MCF 10A (cell line): ENCODE measurements at regions of chr20 and their contacts with region 1.

Region 1: DNA sequence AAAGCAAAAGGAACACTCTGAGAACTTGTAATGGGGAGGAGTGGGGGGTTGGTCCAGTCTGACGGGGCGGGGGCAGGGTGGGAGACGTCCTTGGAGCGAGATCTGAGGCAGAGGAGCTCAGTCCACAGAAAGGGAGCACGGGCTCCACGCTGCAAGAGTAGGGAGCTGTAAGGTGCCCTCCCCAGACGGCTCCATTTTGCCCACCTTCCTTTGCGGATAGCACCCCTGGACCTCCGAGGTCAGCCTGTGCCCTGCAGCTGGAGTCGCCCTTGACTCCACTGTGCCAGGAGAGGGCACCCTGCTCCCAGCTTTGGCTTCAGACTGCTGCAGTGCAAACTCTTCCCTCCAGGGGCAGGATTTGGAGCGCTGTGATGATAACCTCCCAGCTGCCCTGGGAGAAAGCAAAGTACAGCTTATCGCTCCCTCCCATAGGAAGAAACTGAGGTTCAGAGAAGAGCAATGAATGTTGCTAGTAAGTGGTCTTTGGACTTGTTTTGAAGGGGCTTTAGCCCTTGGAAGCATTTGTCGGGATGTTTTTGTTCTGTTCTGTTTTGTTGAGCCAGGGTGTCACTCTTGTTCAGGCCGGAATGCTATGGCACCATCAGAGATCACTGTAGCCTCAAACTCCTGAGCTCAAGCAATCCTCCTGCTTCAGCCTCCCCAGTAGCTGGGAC is 9.5 kb upstream of the AHCY start:
- DNase-seq: peak; percentile 91
- H3K4me3 Mint-ChIP-seq: peak overlapping the region; percentile 35
- H3K27ac Mint-ChIP-seq: no peak overlapping the region
- H3K4me1 Mint-ChIP-seq: peaks cover 37% of the 10 kb centered on the region
- H3K27me3 Mint-ChIP-seq: no peaks in the 10 kb centered on the region
- CTCF ChIP-seq: peak; percentile 100

Region 2: GRCh38 chr20:34180460-34181120 is 132.1 kb before region 1 on chr20:
- CTCF ChIA-PET with region 1: no interaction called
- POLR2A ChIA-PET with region 1: no interaction called
- intact Hi-C with region 1: no loop called
- DNase-seq: peak; percentile 31
- H3K4me3 Mint-ChIP-seq: no peak overlapping the region
- H3K27ac Mint-ChIP-seq: no peak overlapping the region
- H3K4me1 Mint-ChIP-seq: peaks cover 12% of the 10 kb centered on the region
- H3K27me3 Mint-ChIP-seq: peaks cover 22% of the 10 kb centered on the region
- CTCF ChIP-seq: no peak

Region 3: DNA sequence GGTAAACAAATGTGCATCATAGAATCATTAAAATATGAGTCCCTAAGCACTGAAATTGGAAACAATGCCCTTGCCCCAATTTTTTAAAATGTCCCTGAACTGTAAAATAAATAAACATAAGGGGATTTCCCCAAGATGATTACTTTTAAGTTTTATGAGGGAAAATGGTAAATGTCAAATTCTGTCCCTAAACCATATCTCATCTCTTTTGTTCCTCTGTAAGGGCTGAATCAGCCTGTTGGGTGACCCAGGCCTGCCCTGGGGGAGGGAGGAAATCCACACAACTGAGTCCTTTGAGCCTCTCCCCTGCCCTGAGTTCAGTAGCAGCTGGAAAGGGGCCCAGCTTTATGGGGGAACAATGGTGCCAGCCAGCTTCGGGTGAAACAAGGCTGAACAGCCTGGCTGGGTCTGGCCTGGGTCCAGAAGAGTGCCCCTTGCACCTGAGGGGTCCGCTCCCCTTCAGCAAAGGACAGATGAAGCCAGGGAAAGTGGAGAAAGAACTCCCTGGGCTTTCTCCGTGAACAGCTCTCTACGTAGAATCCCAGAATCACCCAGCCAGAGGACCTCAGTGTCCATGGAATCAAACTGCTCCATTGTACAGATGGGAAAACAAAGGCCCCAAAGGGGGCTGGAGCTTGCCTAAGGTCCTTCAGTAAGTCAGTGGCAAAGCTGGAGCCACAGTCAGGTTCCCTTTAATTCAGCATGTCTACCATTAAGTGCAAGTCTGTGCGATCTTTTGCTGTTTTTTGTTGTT is 22.1 kb after region 1 on chr20:
- CTCF ChIA-PET with region 1: interaction called, 48 read pairs
- POLR2A ChIA-PET with region 1: interaction called, 41 read pairs
- intact Hi-C with region 1: no loop called
- DNase-seq: peak; percentile 42
- H3K4me3 Mint-ChIP-seq: no peak overlapping the region
- H3K27ac Mint-ChIP-seq: peak overlapping the region; percentile 85
- H3K4me1 Mint-ChIP-seq: peaks cover 15% of the 10 kb centered on the region
- H3K27me3 Mint-ChIP-seq: no peaks in the 10 kb centered on the region
- CTCF ChIP-seq: no peak

Region 4: DNA sequence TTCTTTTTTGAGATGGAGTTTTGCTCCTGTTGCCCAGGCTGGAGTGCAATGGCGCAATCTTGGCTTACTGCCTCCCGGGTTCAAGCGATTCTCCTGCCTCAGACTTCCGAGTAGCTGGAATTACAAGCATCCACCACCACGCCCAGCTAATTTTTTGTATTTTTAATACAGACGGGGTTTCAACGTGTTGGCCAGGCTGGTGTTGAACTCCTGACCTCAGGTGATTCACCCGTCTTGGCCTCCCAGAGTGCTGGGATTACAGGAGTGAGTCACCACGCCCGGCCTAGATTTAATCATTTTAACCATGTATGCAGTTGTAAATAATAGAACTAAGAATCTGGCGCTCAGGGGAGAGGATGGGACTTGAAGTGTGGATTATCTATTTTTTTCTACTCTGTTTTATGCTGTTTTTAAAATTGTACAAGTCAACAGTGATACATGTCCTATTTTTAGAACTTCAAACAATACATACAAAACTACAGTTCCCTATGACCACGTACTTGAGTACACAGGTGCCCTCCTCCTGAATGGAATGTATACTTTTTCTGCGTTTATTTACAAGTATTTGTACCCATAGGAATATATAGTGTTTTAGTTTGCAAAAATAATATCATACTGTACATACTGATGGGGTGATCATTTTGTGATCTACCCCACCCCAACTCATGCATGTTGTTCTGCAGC is 78.2 kb after region 1 on chr20:
- CTCF ChIA-PET with region 1: interaction called, 23 read pairs
- POLR2A ChIA-PET with region 1: interaction called, 34 read pairs
- intact Hi-C with region 1: loop called (anchors 1 kb)
- DNase-seq: peak; percentile 95
- H3K4me3 Mint-ChIP-seq: no peak overlapping the region
- H3K27ac Mint-ChIP-seq: peak overlapping the region; percentile 55
- H3K4me1 Mint-ChIP-seq: peaks cover 23% of the 10 kb centered on the region
- H3K27me3 Mint-ChIP-seq: no peaks in the 10 kb centered on the region
- CTCF ChIP-seq: no peak

Region 5: DNA sequence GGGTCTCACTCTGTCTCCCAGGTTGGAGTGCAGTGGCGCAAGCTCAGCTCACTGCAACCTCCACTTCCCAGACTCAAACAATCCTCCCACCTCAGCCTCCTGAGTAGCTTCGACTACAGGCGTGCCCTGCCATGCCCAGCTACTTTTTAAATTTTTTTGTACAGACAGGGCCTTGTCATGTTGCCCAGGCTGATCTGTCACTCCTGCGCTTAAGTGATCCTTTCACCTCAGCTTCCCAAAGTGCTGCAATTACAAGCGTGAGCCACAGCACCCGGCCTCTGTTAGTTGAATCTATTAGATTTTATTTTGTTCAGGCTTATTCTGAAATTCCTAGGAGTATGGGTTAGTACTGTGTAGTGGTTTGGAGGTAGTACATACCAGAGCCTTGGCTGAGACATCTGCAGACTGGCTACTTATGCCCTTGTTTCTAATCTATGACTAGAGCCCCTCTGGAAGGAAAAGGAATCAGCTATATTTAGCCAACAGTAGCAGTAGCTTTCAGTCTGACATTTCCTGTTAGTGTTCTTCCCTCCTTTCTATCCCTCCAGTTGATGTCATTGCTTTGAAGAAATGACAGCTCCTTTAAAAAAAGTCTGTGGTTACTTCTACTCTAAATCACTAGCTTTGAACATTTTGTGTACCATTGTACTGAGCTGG is 124.8 kb after region 1 on chr20:
- CTCF ChIA-PET with region 1: interaction called, 27 read pairs
- POLR2A ChIA-PET with region 1: no interaction called
- intact Hi-C with region 1: no loop called
- DNase-seq: no peak
- H3K4me3 Mint-ChIP-seq: no peak overlapping the region
- H3K27ac Mint-ChIP-seq: no peak overlapping the region
- H3K4me1 Mint-ChIP-seq: peaks cover 5% of the 10 kb centered on the region
- H3K27me3 Mint-ChIP-seq: no peaks in the 10 kb centered on the region
- CTCF ChIP-seq: no peak

Region 6: GRCh38 chr20:34491226-34491931 is 178.7 kb after region 1 on chr20:
- CTCF ChIA-PET with region 1: interaction called, 48 read pairs
- POLR2A ChIA-PET with region 1: no interaction called
- intact Hi-C with region 1: no loop called
- DNase-seq: no peak
- H3K4me3 Mint-ChIP-seq: no peak overlapping the region
- H3K27ac Mint-ChIP-seq: no peak overlapping the region
- H3K4me1 Mint-ChIP-seq: no peaks in the 10 kb centered on the region
- H3K27me3 Mint-ChIP-seq: no peaks in the 10 kb centered on the region
- CTCF ChIP-seq: no peak

Region 7: DNA sequence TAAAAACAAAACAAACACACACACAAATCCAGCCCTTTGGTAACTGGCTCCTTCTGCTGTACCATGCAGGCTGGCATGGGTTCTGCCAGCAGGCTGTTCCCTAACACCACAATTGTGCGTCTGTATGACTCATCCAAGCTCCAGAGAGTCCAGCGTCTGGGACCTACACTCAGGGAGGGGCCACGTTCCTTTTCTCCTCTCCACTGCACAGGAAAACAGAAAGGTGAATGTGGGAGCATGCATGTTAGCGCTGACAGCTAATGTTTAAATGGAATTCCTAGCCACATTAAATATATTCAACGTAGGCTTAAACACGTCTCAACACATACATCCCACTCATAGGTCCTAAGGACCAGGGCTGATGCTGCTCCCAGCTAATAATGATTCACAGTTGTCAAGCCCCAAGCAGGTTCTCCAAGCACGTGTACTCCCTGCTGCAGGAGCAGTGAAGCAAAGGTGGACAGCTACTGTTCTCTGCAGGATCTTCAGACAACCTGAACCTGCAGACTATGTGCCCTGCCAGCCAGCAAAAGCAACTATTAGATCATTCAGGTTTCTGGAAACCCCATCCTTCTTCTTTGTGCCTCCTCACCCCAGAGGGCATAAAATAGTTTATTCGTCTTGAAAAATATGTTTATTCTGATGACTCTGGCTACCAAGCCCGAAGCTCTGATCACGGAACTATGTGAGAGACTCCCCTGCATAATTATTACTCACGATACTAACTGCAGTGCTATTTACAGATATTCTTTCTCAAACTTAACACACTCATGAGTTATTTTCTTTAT is 266.7 kb after region 1 on chr20:
- CTCF ChIA-PET with region 1: interaction called, 10 read pairs
- POLR2A ChIA-PET with region 1: no interaction called
- intact Hi-C with region 1: loop called (anchors 2 kb)
- DNase-seq: peak; percentile 88
- H3K4me3 Mint-ChIP-seq: peak overlapping the region; percentile 11
- H3K27ac Mint-ChIP-seq: no peak overlapping the region
- H3K4me1 Mint-ChIP-seq: no peaks in the 10 kb centered on the region
- H3K27me3 Mint-ChIP-seq: no peaks in the 10 kb centered on the region
- CTCF ChIP-seq: peak; percentile 87

Region 8: DNA sequence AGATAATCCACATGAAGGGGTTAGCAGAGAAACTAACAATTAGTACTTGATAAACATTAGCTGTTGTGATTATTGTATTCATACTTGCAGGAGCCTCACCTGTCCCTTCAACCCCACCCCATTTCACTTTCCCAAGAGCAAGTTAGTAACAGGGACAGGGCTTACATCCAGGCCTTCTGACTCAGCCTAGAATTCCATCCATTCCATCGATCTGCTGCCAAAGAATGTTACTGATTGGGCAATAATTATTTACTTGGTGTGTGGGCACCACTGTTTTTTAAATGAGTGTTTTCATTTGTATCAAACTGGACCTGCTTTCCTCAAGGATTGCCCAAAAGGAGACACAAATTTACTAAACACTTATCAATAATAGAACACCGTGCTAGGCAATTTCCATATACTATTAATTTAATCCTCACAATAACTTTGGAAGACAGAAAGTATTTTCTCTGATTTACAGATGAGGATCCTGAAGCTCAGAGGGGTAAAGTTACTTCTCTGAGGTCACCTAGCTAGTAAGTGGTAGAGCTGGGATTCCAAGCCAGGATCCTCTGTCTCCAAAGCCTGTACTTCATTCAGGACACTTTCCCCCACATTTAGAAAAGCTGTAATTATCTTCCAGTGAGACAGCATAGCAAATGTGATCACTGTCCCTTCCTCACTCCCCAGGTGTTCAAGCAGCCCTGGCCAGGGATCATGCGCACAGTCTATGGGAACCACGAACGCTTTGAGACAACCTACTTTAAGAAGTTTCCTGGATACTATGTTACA is 610.2 kb after region 1 on chr20:
- CTCF ChIA-PET with region 1: no interaction called
- POLR2A ChIA-PET with region 1: no interaction called
- intact Hi-C with region 1: no loop called
- DNase-seq: peak; percentile 93
- H3K4me3 Mint-ChIP-seq: no peak overlapping the region
- H3K27ac Mint-ChIP-seq: no peak overlapping the region
- H3K4me1 Mint-ChIP-seq: peaks cover 34% of the 10 kb centered on the region
- H3K27me3 Mint-ChIP-seq: no peaks in the 10 kb centered on the region
- CTCF ChIP-seq: no peak